IMR-90 (cell line): ENCODE measurements at regions of chr13 and their contacts with region 1.

Region 1: DNA sequence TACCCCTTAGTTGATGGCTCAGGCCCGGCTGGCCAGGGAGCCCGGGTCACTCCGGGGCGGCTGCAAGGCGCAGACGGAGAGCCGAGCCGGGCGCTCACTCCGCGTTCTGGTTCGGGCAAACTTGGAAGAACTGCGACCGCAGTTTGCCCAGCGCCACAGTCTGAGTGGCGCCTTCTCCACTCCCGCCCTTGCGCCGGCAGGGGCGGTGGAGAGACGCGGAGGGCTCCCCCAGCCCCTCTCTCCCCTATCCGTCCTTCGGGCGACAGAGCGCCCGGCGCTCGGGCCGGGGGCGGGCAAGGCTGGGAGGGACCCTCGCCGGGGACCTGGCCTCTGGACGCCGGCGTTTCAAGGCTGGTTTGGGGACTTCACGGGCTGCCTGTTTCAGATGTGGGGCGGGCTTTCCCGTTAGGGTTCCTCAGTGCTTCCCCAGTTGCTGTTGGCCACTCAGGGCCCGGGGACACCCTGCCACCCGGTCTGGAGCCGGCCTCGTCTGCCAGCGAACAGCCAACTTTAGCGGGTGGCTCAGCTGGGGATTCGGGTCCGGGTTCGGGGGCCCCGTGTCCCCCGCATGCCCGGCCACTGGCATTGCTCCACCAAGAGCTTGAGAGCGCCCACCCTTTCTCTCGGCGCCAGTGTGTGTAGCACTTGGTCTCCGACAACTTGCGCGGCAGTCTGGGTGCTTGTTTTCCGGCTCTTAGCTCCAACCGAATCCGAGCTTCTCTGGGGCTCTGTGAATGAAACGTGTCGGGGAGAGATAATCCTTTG is 1.5 kb downstream of the GPC6 start:
- DNase-seq: peak; percentile 87
- ATAC-seq: peak; percentile 74
- H3K4me3 ChIP-seq: peak overlapping the region; percentile 50
- H3K27ac ChIP-seq: peak overlapping the region; percentile 75
- H3K4me1 ChIP-seq: 0 out of 2 replicates have a peak, but pooled peaks cover 2% of the 10 kb centered on the region
- H3K27me3 ChIP-seq: no peaks in the 10 kb centered on the region
- CTCF ChIP-seq: peak; percentile 63
- POLR2A ChIP-seq: 0 out of 2 replicates have a peak, but pooled peaks have one; percentile 46
- RAD21 ChIP-seq: peak; percentile 64

Region 2: DNA sequence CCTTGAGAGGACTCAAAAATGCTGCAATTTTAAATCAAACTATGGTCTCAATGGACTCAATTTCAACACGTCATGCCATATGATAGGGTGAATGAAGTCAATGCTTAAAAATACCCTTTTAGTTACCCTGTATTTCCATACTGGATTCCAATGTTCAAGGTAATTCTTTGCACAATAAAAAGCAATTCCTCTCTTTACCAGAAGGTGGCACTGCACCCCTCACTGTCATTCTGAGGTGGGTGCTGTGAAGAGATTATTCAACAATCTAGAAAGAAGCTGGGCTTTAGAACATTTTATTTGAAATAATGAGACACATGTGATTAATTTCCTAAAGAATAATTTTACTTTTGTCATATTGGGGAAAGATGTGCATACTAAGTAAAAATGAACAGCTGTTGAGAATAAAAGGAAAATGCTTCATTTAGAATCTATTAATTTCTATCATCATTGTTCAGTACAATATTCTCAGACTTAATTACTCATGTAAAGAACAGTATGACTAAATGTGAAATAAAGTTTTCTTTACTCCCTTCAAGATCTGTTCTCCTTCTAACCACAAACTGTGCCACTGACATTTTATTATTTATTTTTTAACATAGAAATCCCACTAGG is 1040.6 kb before region 1 on chr13:
- CTCF ChIA-PET with region 1: no interaction called
- POLR2A ChIA-PET with region 1: no interaction called
- dilution Hi-C with region 1: no loop called
- in situ Hi-C with region 1: no loop called
- intact Hi-C with region 1: loop called (anchors 2 kb)
- DNase-seq: peak; percentile 27
- ATAC-seq: peak; percentile 66
- H3K4me3 ChIP-seq: no peak overlapping the region
- H3K27ac ChIP-seq: no peak overlapping the region
- H3K4me1 ChIP-seq: no peaks in the 10 kb centered on the region
- H3K27me3 ChIP-seq: no peaks in the 10 kb centered on the region
- CTCF ChIP-seq: peak; percentile 79
- POLR2A ChIP-seq: no peak
- RAD21 ChIP-seq: peak; percentile 78

Region 3: DNA sequence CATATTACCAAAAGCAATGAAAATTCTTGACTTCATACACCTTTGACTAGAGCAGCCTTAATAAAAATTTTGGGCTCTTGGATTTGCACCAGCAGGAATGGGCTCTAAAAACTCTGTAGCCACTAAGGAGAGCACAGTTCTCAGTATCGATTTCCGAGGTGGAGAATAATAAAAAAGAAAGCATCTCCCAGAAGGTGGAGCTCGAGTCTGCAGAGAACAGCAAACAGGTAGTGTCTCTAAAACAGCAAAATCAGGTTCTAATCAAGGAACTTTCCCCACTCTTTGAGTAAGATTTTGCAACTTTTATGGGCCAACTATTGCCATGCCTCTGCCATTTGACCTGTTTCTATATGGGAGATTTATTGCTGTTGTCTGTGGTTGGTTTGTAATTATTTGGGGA is 260.1 kb before region 1 on chr13:
- CTCF ChIA-PET with region 1: no interaction called
- POLR2A ChIA-PET with region 1: no interaction called
- dilution Hi-C with region 1: no loop called
- in situ Hi-C with region 1: no loop called
- intact Hi-C with region 1: loop called (anchors 10 kb)
- DNase-seq: peak; percentile 16
- ATAC-seq: 0 out of 2 replicates have a peak, but pooled peaks have one; percentile 35
- H3K4me3 ChIP-seq: no peak overlapping the region
- H3K27ac ChIP-seq: no peak overlapping the region
- H3K4me1 ChIP-seq: no peaks in the 10 kb centered on the region
- H3K27me3 ChIP-seq: no peaks in the 10 kb centered on the region
- CTCF ChIP-seq: peak; percentile 46
- POLR2A ChIP-seq: no peak
- RAD21 ChIP-seq: peak; percentile 62

Region 4: DNA sequence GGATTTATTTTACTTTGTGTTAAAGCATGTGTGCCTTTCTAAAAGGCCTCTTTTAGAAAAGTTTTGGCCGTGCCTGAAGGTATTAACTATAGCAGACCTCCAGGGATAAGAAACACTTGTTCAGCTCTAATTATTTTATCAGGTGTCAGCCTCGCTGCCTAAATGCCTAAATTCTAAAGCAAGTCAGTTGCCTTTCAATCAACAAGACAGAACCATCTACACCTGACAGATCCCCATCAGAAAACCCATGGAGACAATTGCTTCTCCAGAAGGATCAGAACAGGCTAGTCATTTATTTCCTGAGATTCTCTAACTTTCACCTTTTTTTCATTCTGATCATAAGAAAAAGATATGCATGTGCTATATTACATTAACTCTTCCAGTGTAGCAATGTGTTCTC is 172.8 kb before region 1 on chr13:
- CTCF ChIA-PET with region 1: no interaction called
- POLR2A ChIA-PET with region 1: no interaction called
- dilution Hi-C with region 1: no loop called
- in situ Hi-C with region 1: no loop called
- intact Hi-C with region 1: no loop called
- DNase-seq: no peak
- ATAC-seq: no peak
- H3K4me3 ChIP-seq: no peak overlapping the region
- H3K27ac ChIP-seq: no peak overlapping the region
- H3K4me1 ChIP-seq: no peaks in the 10 kb centered on the region
- H3K27me3 ChIP-seq: no peaks in the 10 kb centered on the region
- CTCF ChIP-seq: no peak
- POLR2A ChIP-seq: no peak
- RAD21 ChIP-seq: no peak

Region 5: GRCh38 chr13:93603043-93603442 is 375.0 kb after region 1 on chr13:
- CTCF ChIA-PET with region 1: no interaction called
- POLR2A ChIA-PET with region 1: no interaction called
- dilution Hi-C with region 1: no loop called
- in situ Hi-C with region 1: no loop called
- intact Hi-C with region 1: loop called (anchors 10 kb)
- DNase-seq: peak; percentile 82
- ATAC-seq: peak; percentile 93
- H3K4me3 ChIP-seq: no peak overlapping the region
- H3K27ac ChIP-seq: no peak overlapping the region
- H3K4me1 ChIP-seq: peaks cover 3% of the 10 kb centered on the region
- H3K27me3 ChIP-seq: no peaks in the 10 kb centered on the region
- CTCF ChIP-seq: no peak
- POLR2A ChIP-seq: no peak
- RAD21 ChIP-seq: no peak

Region 6: GRCh38 chr13:93942016-93942415 is 714.0 kb after region 1 on chr13:
- CTCF ChIA-PET with region 1: no interaction called
- POLR2A ChIA-PET with region 1: no interaction called
- dilution Hi-C with region 1: no loop called
- in situ Hi-C with region 1: no loop called
- intact Hi-C with region 1: loop called (anchors 10 kb)
- DNase-seq: peak; percentile 59
- ATAC-seq: peak; percentile 61
- H3K4me3 ChIP-seq: no peak overlapping the region
- H3K27ac ChIP-seq: no peak overlapping the region
- H3K4me1 ChIP-seq: peaks cover 4% of the 10 kb centered on the region; the same call in 1 of the 2 replicates
- H3K27me3 ChIP-seq: no peaks in the 10 kb centered on the region
- CTCF ChIP-seq: no peak
- POLR2A ChIP-seq: no peak
- RAD21 ChIP-seq: no peak

Region 7: DNA sequence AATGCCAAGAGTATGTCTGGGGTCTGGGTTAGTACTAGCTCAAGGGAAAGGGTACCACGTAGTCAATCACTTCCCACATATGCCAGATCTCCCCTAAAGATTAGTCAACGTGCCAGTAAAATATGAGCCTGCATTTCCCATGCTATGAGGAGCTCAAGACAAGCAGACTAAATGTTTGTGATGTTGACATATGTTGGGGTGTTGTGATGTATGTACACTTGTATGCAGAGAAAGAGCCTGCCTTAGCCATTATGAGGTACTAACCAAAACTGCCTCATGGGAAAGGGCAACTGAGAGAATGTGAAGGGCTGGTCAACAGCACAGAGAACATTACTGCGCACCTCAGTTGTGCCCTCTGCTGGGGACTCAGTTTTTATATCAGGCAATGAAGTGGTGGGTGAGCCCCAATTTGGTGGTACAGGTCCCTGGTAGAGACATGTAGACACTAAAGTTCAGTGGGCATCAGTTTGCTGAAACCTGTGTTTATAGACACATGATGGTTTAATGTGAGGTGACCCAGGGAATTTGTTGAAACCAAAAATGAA is 964.4 kb after region 1 on chr13:
- CTCF ChIA-PET with region 1: no interaction called
- POLR2A ChIA-PET with region 1: no interaction called
- dilution Hi-C with region 1: no loop called
- in situ Hi-C with region 1: no loop called
- intact Hi-C with region 1: loop called (anchors 10 kb)
- DNase-seq: peak; percentile 26
- ATAC-seq: no peak
- H3K4me3 ChIP-seq: no peak overlapping the region
- H3K27ac ChIP-seq: no peak overlapping the region
- H3K4me1 ChIP-seq: peaks cover 2% of the 10 kb centered on the region; the same call in 1 of the 2 replicates
- H3K27me3 ChIP-seq: no peaks in the 10 kb centered on the region
- CTCF ChIP-seq: peak; percentile 40
- POLR2A ChIP-seq: no peak
- RAD21 ChIP-seq: peak; percentile 49

Region 8: DNA sequence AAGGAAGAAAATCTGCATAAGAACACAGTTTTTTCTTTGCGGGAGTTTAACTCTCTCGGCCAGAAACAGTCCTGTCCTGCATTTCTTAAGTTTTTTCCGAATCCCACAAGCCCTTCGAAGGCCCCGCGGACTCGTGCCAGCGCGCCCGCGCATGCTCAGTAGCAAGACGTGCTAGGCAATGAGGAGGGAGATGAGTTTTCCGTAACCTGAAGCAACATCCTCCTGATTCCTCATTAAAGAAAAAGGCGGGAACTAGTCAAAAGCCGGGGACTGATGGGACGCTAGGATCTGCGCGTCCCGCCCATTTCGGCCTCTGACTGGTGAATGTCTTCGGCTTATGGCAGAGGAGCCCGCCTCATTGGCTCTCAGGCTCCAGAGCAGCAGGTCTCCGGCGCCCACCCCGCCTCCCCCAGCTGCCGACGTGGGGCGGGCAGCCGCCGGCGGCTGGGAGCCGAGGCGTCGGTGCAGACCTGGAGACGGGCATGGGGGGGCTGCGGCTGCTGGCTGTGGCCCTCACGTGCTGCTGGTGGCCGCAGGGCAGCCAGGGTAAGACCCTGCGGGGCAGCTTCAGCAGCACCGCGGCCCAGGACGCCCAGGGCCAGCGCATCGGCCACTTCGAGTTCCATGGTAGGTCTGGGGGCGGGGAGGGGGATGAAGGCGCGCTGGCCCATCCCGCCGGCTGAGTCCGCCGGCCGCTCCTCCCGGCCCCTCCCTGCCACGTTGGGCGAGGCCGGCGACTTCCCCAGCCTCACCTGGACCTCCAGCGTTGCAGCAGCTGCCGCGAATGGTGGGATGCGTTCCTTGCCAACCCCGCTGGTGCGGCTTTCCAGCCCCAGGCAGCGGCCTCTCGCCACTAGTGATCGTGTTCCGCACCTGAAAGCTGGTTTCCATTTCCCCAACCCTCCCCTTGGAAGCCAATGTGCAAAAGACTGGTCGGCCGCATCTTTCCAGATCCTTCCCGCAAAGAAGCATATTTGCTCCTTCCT is 1373.7 kb after region 1 on chr13 and contains the start of gene GPR180:
- CTCF ChIA-PET with region 1: no interaction called
- POLR2A ChIA-PET with region 1: no interaction called
- dilution Hi-C with region 1: no loop called
- in situ Hi-C with region 1: loop called (anchors 25 kb)
- intact Hi-C with region 1: no loop called
- DNase-seq: peak; percentile 100
- ATAC-seq: peak; percentile 99
- H3K4me3 ChIP-seq: peak within 1 kb of the TSS; percentile 83
- H3K27ac ChIP-seq: peak within 1 kb of the TSS; percentile 85
- H3K4me1 ChIP-seq: peaks cover 6% of the 10 kb centered on the region
- H3K27me3 ChIP-seq: no peaks in the 10 kb centered on the region
- CTCF ChIP-seq: no peak
- POLR2A ChIP-seq: peak; percentile 73
- RAD21 ChIP-seq: no peak
- total RNA-seq, gene GPR180: 10.8 and 14.2 TPM in 2 replicates